Cardiac septum (tissue), 1 donor: ENCODE measurements at regions of chr9 and their contacts with region 1.

Region 1: DNA sequence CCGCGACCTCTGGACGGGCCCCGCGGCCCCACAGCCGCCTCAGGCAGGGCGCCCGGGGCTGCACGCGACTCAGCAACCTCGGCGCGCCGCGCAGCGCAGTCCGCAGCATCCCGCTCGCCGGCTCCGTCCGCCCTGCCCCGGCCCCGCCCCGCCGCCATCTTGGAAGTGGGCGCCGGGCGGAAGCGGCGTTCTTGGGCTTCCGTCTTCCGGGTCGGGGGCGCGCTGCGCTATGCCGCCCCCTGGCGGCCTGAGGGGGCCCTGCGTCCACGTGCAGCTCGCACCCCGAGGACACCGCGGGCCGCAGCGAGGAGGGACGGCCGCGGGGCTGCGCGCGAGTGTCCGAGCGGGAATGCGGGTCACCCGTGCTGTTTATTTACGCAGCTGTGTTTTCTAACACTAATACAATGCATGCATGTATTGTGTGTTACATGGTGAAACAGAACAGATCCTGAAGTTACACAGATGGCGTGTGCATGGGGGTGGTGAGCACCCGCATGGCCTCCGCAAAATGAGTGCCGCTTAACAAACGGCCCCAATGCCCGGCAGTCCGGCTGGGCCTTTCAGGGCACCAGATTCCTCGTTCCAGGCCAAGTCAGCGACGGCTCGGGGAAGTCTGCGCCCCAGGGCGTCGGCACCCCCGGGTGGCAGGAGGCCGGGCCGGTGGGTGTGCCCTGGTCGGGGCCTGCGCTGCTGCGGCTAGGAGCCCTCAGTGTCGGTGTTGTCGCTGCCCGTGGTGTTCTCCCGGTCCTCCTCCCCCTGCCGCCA is at the start of gene DNLZ:
- DNase-seq: peak; percentile 93
- total RNA-seq, gene DNLZ: 34.1 TPM

Region 2: GRCh38 chr9:136255896-136256890 is 107.6 kb before region 1 on chr9:
- intact Hi-C with region 1: no loop called
- DNase-seq: no peak

Region 3: GRCh38 chr9:136306211-136307208 is 57.3 kb before region 1 on chr9:
- intact Hi-C with region 1: no loop called
- DNase-seq: no peak

Region 4: GRCh38 chr9:136326061-136326760 is 37.6 kb before region 1 on chr9:
- intact Hi-C with region 1: no loop called
- DNase-seq: no peak

Region 5: GRCh38 chr9:136345281-136346156 is 18.3 kb before region 1 on chr9:
- intact Hi-C with region 1: loop called (anchors 1 kb)
- DNase-seq: peak; percentile 88